ENCODE measurements at regions of chr2 and their contacts with region 1.

Region 1: GRCh38 chr2:230987137-230988020 is 8.5 kb upstream of the SPATA3 start:
- DNase-seq: peak; percentile 84 to 88 (median 85)
- ATAC-seq: peak; percentile 95 to 99 (median 97)
- H3K4me3 ChIP-seq: peak overlapping the region in 2 of 3 donors; percentile 37 to 40
- H3K27ac ChIP-seq: no peak overlapping the region
- H3K4me1 ChIP-seq: peaks cover 0 to 4% (median 0%) of the 10 kb centered on the region in 4 donors
- H3K27me3 ChIP-seq: peaks cover 0 to 6% of the 10 kb centered on the region in 2 donors
- CTCF ChIP-seq: peak; percentile 82 to 99 (median 96)
- POLR2A ChIP-seq: no peak

Region 2: DNA sequence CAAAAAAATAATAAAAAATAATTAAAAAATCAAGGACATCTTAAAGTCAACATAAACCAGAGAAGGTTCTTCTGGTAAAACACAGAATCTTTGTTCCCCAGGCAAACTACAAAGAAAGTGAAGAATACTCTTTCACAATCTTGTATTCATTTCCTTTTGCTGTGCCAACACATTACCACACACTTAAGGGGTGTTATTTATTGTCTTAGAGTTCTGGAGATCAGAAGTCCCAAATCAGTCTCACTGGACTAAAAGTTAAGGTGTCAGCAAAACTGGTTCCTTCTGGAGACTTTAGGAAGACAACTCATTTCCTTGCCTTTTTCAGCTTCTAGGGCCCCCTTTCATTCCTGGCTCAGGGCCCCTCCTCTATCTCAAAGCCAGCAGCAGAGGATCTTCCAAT is 286.9 kb before region 1 on chr2:
- intact Hi-C with region 1: no loop called
- DNase-seq: peak in 1 of 3 donors; percentile 20
- ATAC-seq: peak; percentile 34 to 67 (median 50)
- H3K4me3 ChIP-seq: no peak overlapping the region
- H3K27ac ChIP-seq: no peak overlapping the region
- H3K4me1 ChIP-seq: no peaks in the 10 kb centered on the region
- H3K27me3 ChIP-seq: no peaks in the 10 kb centered on the region
- CTCF ChIP-seq: no peak
- POLR2A ChIP-seq: no peak

Region 3: DNA sequence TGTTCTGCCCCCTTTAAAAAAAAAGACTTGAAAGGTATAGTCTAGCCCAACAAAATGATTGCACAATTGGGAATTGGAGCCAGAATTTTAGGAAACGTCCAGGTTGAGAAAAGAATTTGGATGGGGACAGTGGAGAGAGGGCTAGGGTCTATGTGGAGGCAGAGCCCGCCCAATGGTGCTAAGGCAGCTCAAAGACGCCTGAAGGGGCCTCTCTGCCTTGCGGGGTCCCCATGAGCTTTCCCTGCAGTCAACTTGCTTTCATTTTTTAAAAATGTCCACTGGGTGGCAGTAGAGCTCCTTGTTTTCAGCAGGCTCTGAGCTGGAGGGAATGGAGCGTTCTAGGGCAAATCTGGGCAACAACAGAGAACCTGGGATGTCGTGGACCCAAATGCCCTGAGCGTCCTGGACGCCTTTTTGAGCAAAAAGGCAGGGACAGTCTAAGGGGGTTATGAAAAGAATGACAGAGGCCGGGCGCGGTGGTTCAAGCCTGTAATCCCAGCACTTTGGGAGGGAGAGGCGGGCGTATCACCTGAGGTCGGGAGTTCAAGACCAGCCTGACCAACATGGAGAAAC is 162.9 kb before region 1 on chr2:
- intact Hi-C with region 1: loop called in 1 of 2 experiments (anchors 10 kb)
- DNase-seq: peak in 2 of 3 donors; percentile 24 to 58
- ATAC-seq: peak; percentile 84 to 95 (median 90)
- H3K4me3 ChIP-seq: peak overlapping the region; percentile 30 to 46 (median 42)
- H3K27ac ChIP-seq: no peak overlapping the region
- H3K4me1 ChIP-seq: peaks cover 0 to 7% (median 0%) of the 10 kb centered on the region in 4 donors
- H3K27me3 ChIP-seq: no peaks in the 10 kb centered on the region
- CTCF ChIP-seq: peak; percentile 71 to 79 (median 74)
- POLR2A ChIP-seq: no peak

Region 4: DNA sequence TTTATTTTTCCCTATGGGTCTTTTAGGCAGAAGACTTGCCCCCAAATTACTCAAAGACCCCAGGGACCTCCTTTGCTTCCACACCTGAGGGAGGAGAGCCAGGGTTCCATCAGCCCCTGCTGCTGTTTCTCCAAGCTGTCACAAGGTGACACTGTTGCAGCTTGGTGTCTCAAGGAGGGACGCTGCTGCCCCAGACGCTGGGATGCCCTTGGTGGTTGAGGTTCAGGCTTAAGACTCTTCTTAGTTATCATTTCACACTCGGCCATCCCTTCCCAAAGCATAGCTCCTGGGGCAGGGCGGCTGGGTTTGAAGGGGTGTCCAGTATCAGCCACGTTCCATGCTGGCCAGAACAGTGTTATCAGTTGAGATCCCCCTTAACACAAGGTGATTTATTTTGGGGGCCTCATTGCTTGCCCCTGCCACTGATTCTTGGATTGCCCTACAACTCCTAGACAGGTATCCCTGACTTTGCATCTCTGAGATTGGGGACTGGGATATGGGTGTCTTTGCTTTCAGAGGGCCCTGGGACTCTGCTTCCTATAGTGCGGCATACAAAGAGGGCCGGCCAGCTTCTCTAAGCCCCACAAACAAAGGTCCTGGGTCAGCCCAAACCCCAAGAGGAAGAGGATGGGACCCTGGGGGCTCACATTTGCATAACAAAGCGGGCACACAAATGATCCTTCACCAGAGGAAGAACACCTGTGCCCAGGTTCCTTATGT is 85.0 kb before region 1 on chr2:
- intact Hi-C with region 1: loop called in 1 of 2 experiments (anchors 5 kb)
- DNase-seq: peak in 2 of 3 donors; percentile 39 to 54
- ATAC-seq: peak; percentile 53 to 76 (median 69)
- H3K4me3 ChIP-seq: no peak overlapping the region
- H3K27ac ChIP-seq: no peak overlapping the region
- H3K4me1 ChIP-seq: no peaks in the 10 kb centered on the region
- H3K27me3 ChIP-seq: no peaks in the 10 kb centered on the region
- CTCF ChIP-seq: peak; percentile 41 to 61 (median 52)
- POLR2A ChIP-seq: no peak

Region 5: GRCh38 chr2:231170055-231170454 is 182.7 kb after region 1 on chr2:
- intact Hi-C with region 1: no loop called
- DNase-seq: no peak
- ATAC-seq: peak in 3 of 4 donors; percentile 18 to 38 (median 27)
- H3K4me3 ChIP-seq: no peak overlapping the region
- H3K27ac ChIP-seq: no peak overlapping the region
- H3K4me1 ChIP-seq: peaks cover 0 to 7% (median 0%) of the 10 kb centered on the region in 4 donors
- H3K27me3 ChIP-seq: no peaks in the 10 kb centered on the region
- CTCF ChIP-seq: no peak
- POLR2A ChIP-seq: no peak

Measured in right lobe of liver (tissue), 6 donors.